ENCODE measurements at regions of chr22 and their contacts with region 1.

Region 1: GRCh38 chr22:17171313-17172171 is 12.5 kb upstream of the HDHD5 start:
- DNase-seq: no peak
- H3K4me3 ChIP-seq: peak overlapping the region; percentile 78
- CTCF ChIP-seq: peak; percentile 99

Region 2: DNA sequence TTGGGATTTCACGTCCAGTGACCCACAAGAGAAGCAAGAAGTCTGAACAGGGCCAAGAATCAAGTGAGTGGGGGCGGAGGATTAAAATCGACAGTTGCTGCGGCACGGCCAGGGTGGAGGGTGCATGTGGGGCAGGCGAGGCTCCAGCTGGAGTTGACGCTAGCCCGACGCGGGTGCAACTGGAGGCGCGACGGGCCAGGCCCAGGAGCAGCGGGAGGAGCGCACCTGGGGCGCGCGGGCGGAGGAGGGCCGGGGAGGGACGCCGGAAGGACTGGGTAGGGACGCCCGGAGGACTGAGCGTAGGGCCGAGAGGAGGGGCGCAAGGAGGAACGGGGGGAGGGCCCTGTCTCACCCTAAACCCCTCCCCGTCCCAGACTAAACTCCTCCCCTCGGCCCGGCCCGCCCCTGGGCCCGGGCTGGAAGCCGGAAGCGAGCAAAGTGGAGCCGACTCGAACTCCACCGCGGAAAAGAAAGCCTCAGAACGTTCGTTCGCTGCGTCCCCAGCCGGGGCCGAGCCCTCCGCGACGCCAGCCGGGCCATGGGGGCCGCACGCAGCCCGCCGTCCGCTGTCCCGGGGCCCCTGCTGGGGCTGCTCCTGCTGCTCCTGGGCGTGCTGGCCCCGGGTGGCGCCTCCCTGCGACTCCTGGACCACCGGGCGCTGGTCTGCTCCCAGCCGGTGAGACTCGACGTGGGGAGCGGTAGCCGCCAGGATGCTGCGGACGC is 86.8 kb before region 1 on chr22 and contains the start of gene IL17RA:
- CTCF ChIA-PET with region 1: interaction called, 265 read pairs
- POLR2A ChIA-PET with region 1: interaction called, 5 read pairs
- DNase-seq: no peak
- H3K4me3 ChIP-seq: peak within 1 kb of the TSS; percentile 80
- CTCF ChIP-seq: no peak

Region 3: DNA sequence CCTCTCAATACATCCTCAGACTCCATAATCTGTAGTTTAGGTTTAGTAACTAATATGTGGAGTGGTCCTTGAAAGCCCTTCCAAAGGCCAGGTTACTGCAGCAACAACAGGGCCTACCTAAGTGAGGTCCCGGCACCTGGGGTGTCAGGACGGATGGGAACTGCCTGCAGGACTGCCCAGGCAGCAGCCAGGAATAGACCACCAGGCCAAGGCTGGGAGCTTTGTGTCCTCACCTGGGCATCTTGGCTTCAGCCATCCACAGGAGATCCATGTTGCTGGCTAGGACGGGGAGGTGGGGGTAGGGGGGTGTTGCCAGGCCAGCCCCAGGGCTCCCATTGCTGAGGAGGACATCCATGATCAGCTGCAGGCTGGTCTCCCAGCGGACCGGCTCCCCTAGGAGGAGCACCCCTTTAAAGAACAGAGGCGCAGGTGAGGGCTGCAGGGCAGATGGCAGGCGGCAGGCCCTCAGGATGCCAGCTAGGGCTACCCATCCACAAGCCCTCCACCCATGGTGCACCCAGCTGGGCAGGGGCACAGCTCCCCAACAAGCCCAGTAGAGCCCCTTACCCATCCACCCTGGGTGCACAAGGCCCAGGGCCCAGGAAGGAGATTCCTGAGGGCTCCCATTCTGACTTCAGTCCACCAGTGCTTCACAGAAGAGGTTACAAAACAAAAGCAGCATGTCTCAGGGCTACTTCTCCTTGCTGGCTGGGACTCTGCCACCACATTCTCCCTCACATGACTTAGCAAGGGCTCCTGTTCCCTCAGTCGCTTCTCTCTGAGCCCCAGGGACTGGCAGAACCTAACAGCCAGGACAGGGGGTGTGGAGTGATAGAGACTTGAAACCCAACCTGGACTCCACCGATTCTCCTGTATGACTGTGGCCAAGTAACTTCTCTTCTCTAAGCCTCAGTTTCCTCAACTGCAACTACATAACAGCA is 30.4 kb before region 1 on chr22:
- CTCF ChIA-PET with region 1: interaction called, 15 read pairs
- POLR2A ChIA-PET with region 1: interaction called, 3 read pairs
- DNase-seq: no peak
- H3K4me3 ChIP-seq: no peak overlapping the region
- CTCF ChIP-seq: no peak

Region 4: DNA sequence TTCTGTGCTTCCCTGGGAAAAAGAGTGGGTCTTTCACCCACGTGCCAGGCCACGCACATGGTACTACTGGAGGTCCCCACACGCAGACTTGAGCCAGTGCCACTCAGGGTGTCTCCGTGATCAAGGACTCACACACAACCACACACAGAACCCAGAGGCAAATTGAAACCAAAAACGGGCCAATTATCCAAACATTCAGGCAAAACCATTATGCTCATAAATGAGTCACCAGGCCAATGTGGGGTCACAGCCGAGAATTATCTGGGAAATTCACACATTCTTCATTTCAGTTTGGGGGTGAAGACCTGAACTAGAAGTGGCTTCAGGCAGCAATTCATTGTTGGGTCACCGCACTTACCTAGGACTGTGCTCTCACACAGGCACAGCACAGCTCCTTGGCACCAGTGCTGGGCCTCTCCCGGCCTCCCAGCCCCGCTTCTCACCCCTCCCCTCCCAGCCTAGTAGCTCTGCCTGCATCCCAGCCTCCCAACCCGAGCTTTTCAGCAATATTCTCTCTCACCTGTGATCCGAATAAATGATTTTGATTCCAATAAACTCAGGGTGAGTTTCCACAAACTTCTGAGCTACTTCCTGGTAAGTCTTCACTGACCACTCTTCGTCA is 19.7 kb after region 1 on chr22:
- CTCF ChIA-PET with region 1: interaction called, 214 read pairs
- POLR2A ChIA-PET with region 1: interaction called, 3 read pairs
- DNase-seq: no peak
- H3K4me3 ChIP-seq: no peak overlapping the region
- CTCF ChIP-seq: no peak

Region 5: DNA sequence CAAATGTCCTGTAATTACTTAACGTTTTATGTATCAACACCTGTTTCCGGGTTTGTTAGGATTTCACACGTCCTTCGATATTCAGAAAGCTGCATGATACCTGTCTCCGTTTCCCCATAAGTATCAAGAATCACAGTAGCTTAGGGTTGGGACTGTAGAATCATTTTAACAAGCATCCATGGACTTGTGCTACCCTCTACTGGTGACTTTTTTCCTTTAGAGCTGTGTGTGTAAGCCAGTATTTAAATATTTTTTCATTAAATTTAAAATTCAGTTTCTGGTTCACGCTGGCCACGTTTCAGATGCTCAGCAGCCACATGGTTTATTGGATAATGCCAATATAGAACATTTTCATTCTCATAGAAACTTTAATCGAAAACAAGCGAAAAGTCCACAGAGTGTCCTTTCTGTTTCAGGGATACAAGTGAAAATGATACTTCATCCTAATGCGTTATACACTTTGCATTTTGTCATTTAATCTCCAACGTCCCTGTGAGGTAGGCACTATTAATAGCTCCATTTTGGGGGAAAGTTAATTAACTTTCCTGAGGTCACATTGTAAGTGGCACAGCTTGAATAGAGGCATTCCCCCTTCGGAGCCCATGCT is 330.2 kb after region 1 on chr22:
- CTCF ChIA-PET with region 1: interaction called, 76 read pairs
- POLR2A ChIA-PET with region 1: no interaction called
- DNase-seq: peak; percentile 19
- H3K4me3 ChIP-seq: no peak overlapping the region
- CTCF ChIP-seq: peak; percentile 30

Measured in AG04449 (cell line).